ENCODE measurements at regions of chr9 and their contacts with region 1.

Region 1: DNA sequence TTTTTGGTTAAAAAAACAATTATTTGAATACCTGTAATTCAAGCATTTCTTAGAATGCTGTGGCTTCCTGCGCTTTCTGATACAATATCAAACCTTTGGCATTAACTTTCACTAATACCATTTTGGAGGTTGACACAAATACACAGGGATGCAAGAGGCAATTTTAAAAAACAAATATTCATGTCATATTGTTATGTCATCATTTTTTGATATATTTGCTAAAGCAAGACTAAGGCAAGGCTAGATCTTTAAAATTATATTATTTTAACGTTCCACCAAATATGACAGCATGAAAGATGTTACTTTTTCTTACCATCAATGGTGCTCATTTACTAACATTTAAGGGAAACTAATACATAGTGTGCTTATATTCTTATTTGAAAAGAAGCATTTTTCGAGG is 93.4 kb upstream of the FSD1L start:
- DNase-seq: no peak
- ATAC-seq: no peak
- H3K4me3 Mint-ChIP-seq: no peak overlapping the region
- H3K27ac Mint-ChIP-seq: no peak overlapping the region
- H3K4me1 Mint-ChIP-seq: peaks cover 10% of the 10 kb centered on the region
- H3K27me3 Mint-ChIP-seq: no peaks in the 10 kb centered on the region
- CTCF ChIP-seq: no peak

Region 2: DNA sequence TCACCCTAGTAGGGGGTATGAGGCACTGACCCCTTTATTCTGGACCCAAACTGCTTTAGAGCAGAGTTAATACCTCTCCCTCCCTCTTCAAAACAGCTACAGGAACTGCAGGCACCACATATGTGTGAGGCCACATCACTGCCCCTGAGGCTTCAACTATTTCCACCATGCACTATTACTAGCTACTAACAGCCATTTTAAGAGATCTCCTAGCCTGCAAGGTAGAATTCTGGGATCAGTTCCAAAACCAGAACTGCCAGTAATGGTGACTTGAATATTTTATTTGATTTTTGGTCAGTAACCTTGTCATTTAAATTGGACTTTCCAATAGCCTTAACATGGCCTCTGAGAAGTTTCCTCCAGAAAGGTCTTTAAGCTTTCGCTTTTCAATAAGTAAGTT is 38.1 kb after region 1 on chr9:
- CTCF ChIA-PET with region 1: no interaction called
- POLR2A ChIA-PET with region 1: no interaction called
- DNase-seq: no peak
- ATAC-seq: peak; percentile 33
- H3K4me3 Mint-ChIP-seq: no peak overlapping the region
- H3K27ac Mint-ChIP-seq: no peak overlapping the region
- H3K4me1 Mint-ChIP-seq: peaks cover 72% of the 10 kb centered on the region
- H3K27me3 Mint-ChIP-seq: no peaks in the 10 kb centered on the region
- CTCF ChIP-seq: no peak

Region 3: DNA sequence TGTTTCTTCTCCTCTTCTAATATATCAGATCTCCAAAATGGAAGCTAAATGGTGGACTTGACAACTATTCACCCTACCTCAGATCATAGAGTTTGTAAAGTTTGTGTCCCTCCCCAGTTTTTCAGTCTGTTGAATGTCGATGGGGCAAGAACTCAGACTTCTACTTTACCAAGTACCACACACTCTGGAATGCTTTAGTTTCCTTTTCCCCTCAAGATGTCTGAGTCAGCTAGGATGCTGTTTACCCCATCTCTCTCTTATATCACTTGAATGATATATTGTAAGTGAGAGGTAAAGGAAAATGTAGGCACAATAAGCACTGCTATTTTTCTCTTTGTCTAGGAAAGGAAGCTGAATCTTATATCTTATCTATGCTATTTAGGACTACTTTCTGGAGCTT is 281.9 kb after region 1 on chr9:
- CTCF ChIA-PET with region 1: no interaction called
- POLR2A ChIA-PET with region 1: interaction called, 14 read pairs
- DNase-seq: no peak
- ATAC-seq: no peak
- H3K4me3 Mint-ChIP-seq: no peak overlapping the region
- H3K27ac Mint-ChIP-seq: no peak overlapping the region
- H3K4me1 Mint-ChIP-seq: no peaks in the 10 kb centered on the region
- H3K27me3 Mint-ChIP-seq: no peaks in the 10 kb centered on the region
- CTCF ChIP-seq: no peak